ENCODE measurements at regions of chr12 and their contacts with region 1.

Region 1: GRCh38 chr12:71329956-71330355 is 109.6 kb upstream of the LGR5 start:
- DNase-seq: no peak
- H3K4me3 ChIP-seq: no peak overlapping the region
- H3K27ac ChIP-seq: no peak overlapping the region
- H3K4me1 ChIP-seq: no peaks in the 10 kb centered on the region
- H3K27me3 ChIP-seq: no peaks in the 10 kb centered on the region
- CTCF ChIP-seq: no peak
- EP300 ChIP-seq: no peak
- POLR2A ChIP-seq: no peak

Region 2: GRCh38 chr12:69929125-69929524 is 1400.8 kb before region 1 on chr12:
- in situ Hi-C with region 1: no loop called
- intact Hi-C with region 1: loop called (anchors 5 kb)
- DNase-seq: no peak
- H3K4me3 ChIP-seq: no peak overlapping the region
- H3K27ac ChIP-seq: no peak overlapping the region
- H3K4me1 ChIP-seq: peaks cover 0 to 4% (median 0%) of the 10 kb centered on the region in 4 donors
- H3K27me3 ChIP-seq: no peaks in the 10 kb centered on the region
- CTCF ChIP-seq: no peak
- EP300 ChIP-seq: no peak
- POLR2A ChIP-seq: no peak

Region 3: DNA sequence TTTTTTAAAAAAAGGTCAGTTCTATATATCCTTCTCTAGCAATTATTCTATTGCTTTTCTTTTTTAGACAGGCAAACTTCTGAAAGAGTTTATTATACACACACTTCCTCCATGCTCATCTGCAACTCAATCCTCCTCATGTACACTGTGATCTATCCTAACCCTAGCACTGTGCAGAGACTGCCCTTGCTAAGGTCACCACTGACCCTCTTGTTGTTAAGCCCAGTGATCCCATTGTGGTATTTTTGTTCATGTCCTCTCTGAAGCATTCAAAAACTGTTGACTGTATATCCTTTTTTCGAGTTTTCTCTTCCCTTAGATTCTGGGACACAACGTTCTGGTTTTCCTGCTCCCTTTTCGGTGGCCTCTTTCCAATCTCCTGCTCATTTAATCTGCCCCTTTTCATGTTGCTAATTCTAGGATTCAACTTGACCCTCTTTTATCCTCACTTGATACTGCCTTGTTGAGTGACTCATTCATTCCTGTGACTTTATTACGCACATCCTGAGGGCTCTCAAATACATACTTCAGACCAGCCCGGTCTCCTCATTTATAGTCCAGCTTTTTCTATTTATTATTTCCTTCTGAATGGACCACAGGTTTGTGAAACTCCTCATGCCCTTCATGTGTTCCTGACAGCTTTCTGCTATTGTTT is 638.8 kb before region 1 on chr12:
- in situ Hi-C with region 1: no loop called
- intact Hi-C with region 1: no loop called
- DNase-seq: no peak
- H3K4me3 ChIP-seq: no peak overlapping the region
- H3K27ac ChIP-seq: no peak overlapping the region
- H3K4me1 ChIP-seq: peaks cover 0 to 8% (median 0%) of the 10 kb centered on the region in 4 donors
- H3K27me3 ChIP-seq: no peaks in the 10 kb centered on the region
- CTCF ChIP-seq: no peak
- EP300 ChIP-seq: no peak
- POLR2A ChIP-seq: no peak

Region 4: DNA sequence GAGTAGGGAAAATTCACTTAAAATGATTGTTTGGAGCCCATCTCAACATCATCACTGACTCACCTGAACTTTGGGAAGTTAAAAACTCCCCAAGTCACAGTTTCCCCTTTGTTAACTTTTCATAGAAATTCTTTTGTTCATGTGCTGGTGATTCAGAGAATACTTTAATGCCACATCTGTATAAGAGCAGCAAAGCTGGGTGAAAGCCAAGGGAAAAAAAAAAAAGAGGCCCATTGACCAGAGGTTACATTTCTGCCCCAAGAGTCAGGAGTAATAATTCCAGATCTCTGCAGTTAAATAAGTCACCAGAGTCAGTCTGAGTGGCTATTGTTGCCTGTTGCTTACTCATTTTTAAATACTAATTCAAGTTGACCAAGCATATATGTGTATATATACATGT is 26.8 kb before region 1 on chr12:
- in situ Hi-C with region 1: no loop called
- intact Hi-C with region 1: no loop called
- DNase-seq: no peak
- H3K4me3 ChIP-seq: no peak overlapping the region
- H3K27ac ChIP-seq: no peak overlapping the region
- H3K4me1 ChIP-seq: no peaks in the 10 kb centered on the region
- H3K27me3 ChIP-seq: no peaks in the 10 kb centered on the region
- CTCF ChIP-seq: no peak
- EP300 ChIP-seq: no peak
- POLR2A ChIP-seq: no peak

Region 5: GRCh38 chr12:71551529-71551928 is 221.6 kb after region 1 on chr12:
- in situ Hi-C with region 1: no loop called
- intact Hi-C with region 1: no loop called
- DNase-seq: no peak
- H3K4me3 ChIP-seq: no peak overlapping the region
- H3K27ac ChIP-seq: no peak overlapping the region
- H3K4me1 ChIP-seq: no peaks in the 10 kb centered on the region
- H3K27me3 ChIP-seq: no peaks in the 10 kb centered on the region
- CTCF ChIP-seq: peak in 4 of 5 experiments; percentile 13 to 28 (median 15)
- EP300 ChIP-seq: no peak
- POLR2A ChIP-seq: no peak

Measured in transverse colon (tissue), 4 donors.